ENCODE measurements at regions of chr6 and their contacts with region 1.

Region 1: DNA sequence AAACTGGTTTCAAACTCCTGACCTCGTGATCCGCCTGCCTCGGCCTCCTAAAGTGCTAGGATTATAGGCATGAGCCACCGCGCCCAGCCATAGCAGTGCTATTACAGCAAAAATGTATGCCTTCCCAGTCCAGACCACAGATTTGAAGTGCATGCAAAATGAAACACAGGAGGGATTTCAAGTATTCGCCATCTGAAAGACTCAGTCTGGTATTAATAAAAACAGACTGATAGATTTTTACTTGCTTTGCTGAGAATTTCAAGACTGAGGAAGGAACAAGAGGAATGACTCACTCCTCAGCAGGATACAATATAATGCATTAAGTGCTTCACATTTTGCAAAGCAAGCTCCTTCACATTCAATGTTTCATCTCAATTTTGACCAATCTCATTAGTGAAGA is 134.9 kb downstream of the TMEM200A start:
- DNase-seq: no peak
- H3K4me3 ChIP-seq: no peak overlapping the region
- H3K27ac ChIP-seq: no peak overlapping the region
- H3K4me1 ChIP-seq: no peaks in the 10 kb centered on the region
- H3K27me3 ChIP-seq: no peaks in the 10 kb centered on the region
- CTCF ChIP-seq: no peak
- EP300 ChIP-seq: no peak
- POLR2A ChIP-seq: no peak

Region 2: GRCh38 chr6:130945401-130945919 is 444.8 kb after region 1 on chr6:
- intact Hi-C with region 1: loop called in 1 of 4 experiments (anchors 10 kb)
- DNase-seq: no peak
- H3K4me3 ChIP-seq: no peak overlapping the region
- H3K27ac ChIP-seq: no peak overlapping the region
- H3K4me1 ChIP-seq: peaks cover 2% of the 10 kb centered on the region
- H3K27me3 ChIP-seq: no peaks in the 10 kb centered on the region
- CTCF ChIP-seq: no peak
- EP300 ChIP-seq: no peak
- POLR2A ChIP-seq: no peak

Measured in ovary (tissue), 10 donors.